B cell (primary cell): ENCODE measurements at regions of chr5 and their contacts with region 1.

Region 1: DNA sequence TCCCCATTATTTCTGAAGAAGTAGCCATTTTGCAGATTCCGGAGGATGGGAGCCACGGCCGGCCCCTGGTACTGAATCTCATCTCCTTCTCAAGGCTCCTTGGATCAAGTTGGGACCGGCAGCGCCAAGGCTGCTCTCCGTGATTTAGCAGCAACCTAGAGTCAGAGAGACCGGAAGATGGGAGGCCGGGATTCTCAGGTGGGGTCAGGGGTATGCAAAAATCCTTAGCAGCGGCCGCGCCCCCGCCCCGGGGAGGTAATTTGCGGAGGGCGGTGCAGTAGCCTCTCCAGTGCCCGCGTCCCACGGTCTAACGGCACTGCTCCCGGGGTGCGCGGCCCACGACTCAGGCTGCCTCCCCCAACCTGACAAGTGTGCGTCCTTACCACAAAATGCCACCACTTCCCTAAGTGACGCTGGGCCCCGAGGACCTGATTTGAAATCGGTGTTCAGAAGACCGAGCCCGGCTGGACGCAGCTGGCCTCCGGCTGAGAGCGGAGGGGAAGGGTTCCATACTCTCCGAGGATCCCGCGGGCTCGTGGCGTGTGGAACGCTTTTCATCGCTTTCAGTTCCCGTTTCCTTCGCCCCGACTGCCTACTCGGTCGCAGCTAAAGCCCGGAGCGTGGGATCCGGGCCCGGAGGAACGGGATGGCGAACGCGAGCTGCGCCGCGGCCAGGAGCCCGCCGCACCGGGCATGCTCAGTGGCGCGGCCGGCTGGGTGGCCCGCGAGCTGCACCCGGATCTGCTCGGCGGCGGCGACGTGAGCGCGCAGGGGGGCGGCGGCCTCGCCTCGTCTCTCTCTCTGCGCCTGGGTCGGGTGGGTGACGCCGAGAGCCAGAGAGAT is at the start of gene SCAMP1:
- DNase-seq: peak; percentile 97
- ATAC-seq: peak; percentile 87
- H3K4me3 ChIP-seq: peak within 1 kb of the TSS; percentile 67 to 99 (median 88)
- H3K4me3 Mint-ChIP-seq: peak within 1 kb of the TSS; percentile 93
- H3K27ac ChIP-seq: peak within 1 kb of the TSS; percentile 81 to 85
- H3K27ac Mint-ChIP-seq: peak within 1 kb of the TSS; percentile 90
- H3K4me1 ChIP-seq: peaks cover 20 to 22% of the 10 kb centered on the region in 2 donors
- H3K4me1 Mint-ChIP-seq: peaks cover 37% of the 10 kb centered on the region
- H3K27me3 ChIP-seq: no peaks in the 10 kb centered on the region
- H3K27me3 Mint-ChIP-seq: no peaks in the 10 kb centered on the region
- CTCF ChIP-seq: peak; percentile 18
- total RNA-seq, gene SCAMP1: 18.4 and 25.4 TPM in 2 replicates

Region 2: DNA sequence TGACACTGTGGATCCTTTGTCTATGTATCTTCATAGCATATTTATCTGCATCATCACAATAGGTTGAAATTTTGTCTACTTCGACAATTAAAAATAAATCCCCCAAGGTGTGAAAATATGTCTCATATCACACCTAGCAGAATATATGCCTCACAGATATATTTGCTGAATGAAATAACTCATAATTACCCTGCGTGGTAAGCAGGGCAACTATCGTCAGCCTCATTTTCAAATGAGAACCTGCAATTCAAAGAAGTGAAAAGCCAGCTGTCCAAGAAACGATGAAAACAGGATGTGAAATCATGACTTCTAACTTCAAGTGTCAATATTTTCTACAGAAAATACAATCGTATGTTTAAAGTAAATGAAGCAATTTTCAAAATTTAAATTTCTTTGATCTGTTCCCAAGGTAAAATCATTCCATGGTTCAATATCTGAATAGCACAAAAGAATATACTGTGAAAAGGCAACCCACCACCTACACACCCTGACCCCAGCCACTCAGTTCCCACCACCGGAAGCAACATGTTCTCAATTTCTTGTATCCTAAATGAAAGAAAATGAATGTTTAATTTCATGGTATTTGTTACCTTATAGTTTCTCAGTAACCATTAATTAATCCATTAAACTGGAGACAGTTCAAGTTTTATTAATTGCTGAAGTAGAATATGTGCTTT is 641.0 kb before region 1 on chr5:
- CTCF ChIA-PET with region 1: no interaction called
- POLR2A ChIA-PET with region 1: no interaction called
- intact Hi-C with region 1: no loop called
- DNase-seq: peak; percentile 29
- ATAC-seq: peak; percentile 33
- H3K4me3 ChIP-seq: no peak overlapping the region
- H3K4me3 Mint-ChIP-seq: peak overlapping the region; percentile 76
- H3K27ac ChIP-seq: peak overlapping the region in 1 of 2 donors; percentile 49
- H3K27ac Mint-ChIP-seq: peak overlapping the region; percentile 73
- H3K4me1 ChIP-seq: peaks cover 12 to 16% of the 10 kb centered on the region in 2 donors
- H3K4me1 Mint-ChIP-seq: peaks cover 35% of the 10 kb centered on the region
- H3K27me3 ChIP-seq: no peaks in the 10 kb centered on the region
- H3K27me3 Mint-ChIP-seq: no peaks in the 10 kb centered on the region
- CTCF ChIP-seq: no peak

Region 3: DNA sequence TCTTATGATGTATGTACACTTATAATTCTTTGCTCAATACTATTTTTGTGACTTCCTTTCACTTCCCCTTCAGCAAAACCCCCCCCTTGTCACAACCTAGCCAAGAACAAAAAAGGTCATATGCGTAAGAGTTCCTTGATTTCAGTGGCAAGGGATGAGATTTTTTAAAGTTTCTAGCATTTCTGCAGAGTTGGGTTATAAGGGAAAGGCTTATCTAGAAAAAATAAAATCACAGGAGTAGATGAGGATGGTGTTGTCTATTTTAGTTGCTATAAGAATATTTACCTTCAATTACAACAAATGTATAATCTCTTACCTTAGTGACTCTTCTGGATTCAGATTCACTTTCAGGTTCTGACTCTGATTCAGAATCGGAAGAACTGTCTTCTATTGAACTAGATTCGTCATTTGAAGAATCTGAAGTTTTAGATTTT is 250.1 kb before region 1 on chr5:
- CTCF ChIA-PET with region 1: no interaction called
- POLR2A ChIA-PET with region 1: no interaction called
- intact Hi-C with region 1: loop called (anchors 5 kb)
- DNase-seq: peak; percentile 80
- ATAC-seq: peak; percentile 71
- H3K4me3 ChIP-seq: peak overlapping the region in 4 of 5 experiments; percentile 4 to 51 (median 30)
- H3K4me3 Mint-ChIP-seq: peak overlapping the region; percentile 64
- H3K27ac ChIP-seq: peak overlapping the region; percentile 69 to 83
- H3K27ac Mint-ChIP-seq: peak overlapping the region; percentile 73
- H3K4me1 ChIP-seq: peaks cover 56 to 67% of the 10 kb centered on the region in 2 donors
- H3K4me1 Mint-ChIP-seq: peaks cover 58% of the 10 kb centered on the region
- H3K27me3 ChIP-seq: no peaks in the 10 kb centered on the region
- H3K27me3 Mint-ChIP-seq: no peaks in the 10 kb centered on the region
- CTCF ChIP-seq: no peak

Region 4: GRCh38 chr5:78294248-78295034 is 65.6 kb before region 1 on chr5 and contains the start of gene AP3B1:
- CTCF ChIA-PET with region 1: interaction called, 101 read pairs
- POLR2A ChIA-PET with region 1: interaction called, 82 read pairs
- intact Hi-C with region 1: loop called (anchors 1 kb)
- DNase-seq: peak; percentile 98
- ATAC-seq: peak; percentile 91
- H3K4me3 ChIP-seq: peak within 1 kb of the TSS; percentile 74 to 99 (median 87)
- H3K4me3 Mint-ChIP-seq: peak within 1 kb of the TSS; percentile 98
- H3K27ac ChIP-seq: peak within 1 kb of the TSS; percentile 75 to 90
- H3K27ac Mint-ChIP-seq: peak within 1 kb of the TSS; percentile 98
- H3K4me1 ChIP-seq: peaks cover 11 to 12% of the 10 kb centered on the region in 2 donors
- H3K4me1 Mint-ChIP-seq: peaks cover 36% of the 10 kb centered on the region
- H3K27me3 ChIP-seq: no peaks in the 10 kb centered on the region
- H3K27me3 Mint-ChIP-seq: no peaks in the 10 kb centered on the region
- CTCF ChIP-seq: no peak
- total RNA-seq, gene AP3B1: 58.9 and 63.5 TPM in 2 replicates

Region 5: GRCh38 chr5:79514391-79515105 is 1154.5 kb after region 1 on chr5:
- CTCF ChIA-PET with region 1: no interaction called
- POLR2A ChIA-PET with region 1: interaction called, 3 read pairs
- intact Hi-C with region 1: loop called (anchors 2 kb)
- DNase-seq: peak; percentile 98
- ATAC-seq: peak; percentile 79
- H3K4me3 ChIP-seq: peak overlapping the region; percentile 32 to 85 (median 76)
- H3K4me3 Mint-ChIP-seq: peak overlapping the region; percentile 100
- H3K27ac ChIP-seq: peak overlapping the region; percentile 89 to 94
- H3K27ac Mint-ChIP-seq: peak overlapping the region; percentile 100
- H3K4me1 ChIP-seq: peaks cover 26 to 29% of the 10 kb centered on the region in 2 donors
- H3K4me1 Mint-ChIP-seq: peaks cover 36% of the 10 kb centered on the region
- H3K27me3 ChIP-seq: peaks cover 5 to 31% (median 28%) of the 10 kb centered on the region in 4 experiments
- H3K27me3 Mint-ChIP-seq: peaks cover 29% of the 10 kb centered on the region
- CTCF ChIP-seq: no peak